ENCODE measurements at regions of chr1 and their contacts with region 1.

Region 1: DNA sequence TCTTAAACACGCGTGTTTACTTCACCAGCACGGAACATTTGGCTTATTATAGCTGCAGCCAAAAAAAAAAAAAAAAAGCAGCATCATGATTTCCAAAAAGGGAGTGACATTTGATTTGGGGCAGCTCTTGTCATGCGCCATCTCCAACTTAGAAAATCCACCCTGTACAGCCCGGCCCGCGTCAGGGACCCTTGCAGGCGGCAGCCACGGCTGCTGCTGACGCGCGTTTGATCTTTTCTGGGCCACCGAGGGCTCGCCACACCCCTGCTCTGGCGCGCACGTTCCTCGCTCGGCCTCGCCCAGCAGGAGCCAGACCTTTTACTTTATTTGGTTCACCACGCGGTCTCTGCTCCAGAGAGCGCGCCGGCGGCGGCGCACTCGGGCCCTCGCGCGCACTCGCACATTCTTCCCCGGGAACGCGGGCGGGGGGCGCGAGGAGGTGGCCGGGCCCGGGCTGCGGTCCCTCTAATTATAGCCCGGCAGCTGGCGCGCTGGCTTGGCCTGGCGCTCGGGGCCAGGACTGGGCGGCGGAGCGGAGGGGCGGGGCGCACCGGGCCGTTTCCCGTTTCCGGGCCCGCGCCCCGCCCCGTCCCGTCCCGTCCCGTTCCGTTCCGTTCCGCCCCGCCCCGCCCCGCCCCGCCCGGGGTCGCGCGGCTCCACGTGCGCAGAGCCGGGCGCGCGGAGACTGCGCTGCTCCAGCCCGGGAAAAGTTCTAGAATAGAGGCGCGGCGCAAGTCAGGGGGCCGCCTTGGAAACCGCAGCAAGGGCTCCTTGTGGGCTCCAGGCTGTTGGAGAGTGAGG is 10.2 kb downstream of the IRF2BP2 start:
- DNase-seq: peak; percentile 28 to 94 (median 66)
- ATAC-seq: peak; percentile 62
- H3K4me3 ChIP-seq: peak overlapping the region; percentile 65
- H3K4me3 Mint-ChIP-seq: peak overlapping the region; percentile 90
- H3K27ac ChIP-seq: peak overlapping the region; percentile 81 to 95
- H3K27ac Mint-ChIP-seq: peak overlapping the region; percentile 98
- H3K4me1 ChIP-seq: peaks cover 45% of the 10 kb centered on the region
- H3K4me1 Mint-ChIP-seq: peaks cover 61% of the 10 kb centered on the region
- H3K27me3 ChIP-seq: no peaks in the 10 kb centered on the region
- H3K27me3 Mint-ChIP-seq: no peaks in the 10 kb centered on the region
- CTCF ChIP-seq: no peak

Region 2: DNA sequence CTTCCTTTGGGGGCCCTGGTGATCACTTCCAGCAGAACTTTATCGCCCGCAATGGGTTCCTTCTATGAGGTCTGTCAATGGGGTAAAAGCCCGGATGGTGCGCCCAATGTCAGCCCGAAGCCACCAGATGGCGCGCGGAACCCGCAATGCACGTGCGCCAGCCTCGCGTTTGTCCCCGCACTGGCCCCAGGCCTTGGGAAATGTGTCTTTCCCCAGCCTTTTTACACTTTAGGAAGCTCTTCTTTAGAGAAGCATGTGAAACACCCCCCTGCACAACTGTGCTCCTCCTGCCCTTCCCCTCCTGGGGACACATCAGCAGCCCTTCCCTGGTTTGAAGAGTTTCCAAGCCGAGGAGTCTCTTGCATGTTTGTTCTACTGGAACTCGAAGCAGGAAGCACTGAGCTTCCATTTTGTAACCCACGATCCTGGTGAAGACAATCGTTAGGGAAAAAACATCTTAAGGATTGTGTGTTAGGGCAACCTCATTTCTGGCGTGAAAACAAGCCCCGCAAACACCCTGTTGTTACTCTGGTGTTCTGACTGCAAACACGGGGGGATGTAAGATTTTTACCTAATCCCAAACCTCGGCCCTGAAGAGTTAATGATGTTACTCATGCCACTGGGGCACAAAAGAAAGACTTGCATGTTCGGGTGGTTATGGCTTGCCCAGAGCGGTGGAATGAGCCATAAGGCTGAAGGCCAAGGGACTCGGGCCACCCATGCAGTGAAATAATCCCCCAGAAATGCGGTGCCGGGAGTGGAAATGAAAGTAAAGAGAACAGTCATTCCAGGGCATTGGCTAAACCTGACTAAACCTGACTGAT is 100.5 kb before region 1 on chr1:
- CTCF ChIA-PET with region 1: interaction called, 3 read pairs
- POLR2A ChIA-PET with region 1: no interaction called
- intact Hi-C with region 1: loop called (anchors 2 kb)
- DNase-seq: peak; percentile 67 to 89 (median 79)
- ATAC-seq: peak; percentile 99
- H3K4me3 ChIP-seq: no peak overlapping the region
- H3K4me3 Mint-ChIP-seq: no peak overlapping the region
- H3K27ac ChIP-seq: no peak overlapping the region
- H3K27ac Mint-ChIP-seq: no peak overlapping the region
- H3K4me1 ChIP-seq: peaks cover 10% of the 10 kb centered on the region
- H3K4me1 Mint-ChIP-seq: peaks cover 8% of the 10 kb centered on the region
- H3K27me3 ChIP-seq: no peaks in the 10 kb centered on the region
- H3K27me3 Mint-ChIP-seq: no peaks in the 10 kb centered on the region
- CTCF ChIP-seq: peak; percentile 88

Region 3: DNA sequence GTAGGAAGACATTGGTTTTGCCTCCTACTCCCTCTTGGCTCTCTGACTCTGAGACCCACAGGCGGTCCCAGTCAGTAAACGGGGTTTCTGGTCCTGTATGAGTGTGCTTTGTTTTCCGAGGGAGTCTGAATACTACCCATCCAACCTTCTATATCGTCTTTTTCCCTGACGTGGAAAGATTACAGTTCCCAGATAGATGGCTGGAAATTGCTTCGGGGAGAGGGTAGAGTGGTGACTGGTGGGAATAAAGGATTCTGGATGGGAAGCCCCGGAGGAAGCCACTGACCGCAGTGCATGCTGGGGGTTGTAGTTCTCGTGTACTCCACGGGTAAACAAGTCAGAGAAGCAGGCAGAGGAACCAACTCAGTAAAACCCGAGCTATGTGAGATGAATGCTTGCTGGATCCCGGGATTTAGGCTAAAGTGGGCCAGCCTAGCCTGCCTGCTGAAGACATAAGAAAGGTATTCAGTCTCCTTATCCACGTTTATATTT is 76.3 kb after region 1 on chr1:
- CTCF ChIA-PET with region 1: no interaction called
- POLR2A ChIA-PET with region 1: no interaction called
- intact Hi-C with region 1: no loop called
- DNase-seq: peak; percentile 17 to 73 (median 46)
- ATAC-seq: peak; percentile 79
- H3K4me3 ChIP-seq: peak overlapping the region; percentile 40
- H3K4me3 Mint-ChIP-seq: peak overlapping the region; percentile 81
- H3K27ac ChIP-seq: no peak overlapping the region
- H3K27ac Mint-ChIP-seq: peak overlapping the region; percentile 8
- H3K4me1 ChIP-seq: peaks cover 9% of the 10 kb centered on the region
- H3K4me1 Mint-ChIP-seq: peaks cover 12% of the 10 kb centered on the region
- H3K27me3 ChIP-seq: no peaks in the 10 kb centered on the region
- H3K27me3 Mint-ChIP-seq: no peaks in the 10 kb centered on the region
- CTCF ChIP-seq: no peak

Region 4: DNA sequence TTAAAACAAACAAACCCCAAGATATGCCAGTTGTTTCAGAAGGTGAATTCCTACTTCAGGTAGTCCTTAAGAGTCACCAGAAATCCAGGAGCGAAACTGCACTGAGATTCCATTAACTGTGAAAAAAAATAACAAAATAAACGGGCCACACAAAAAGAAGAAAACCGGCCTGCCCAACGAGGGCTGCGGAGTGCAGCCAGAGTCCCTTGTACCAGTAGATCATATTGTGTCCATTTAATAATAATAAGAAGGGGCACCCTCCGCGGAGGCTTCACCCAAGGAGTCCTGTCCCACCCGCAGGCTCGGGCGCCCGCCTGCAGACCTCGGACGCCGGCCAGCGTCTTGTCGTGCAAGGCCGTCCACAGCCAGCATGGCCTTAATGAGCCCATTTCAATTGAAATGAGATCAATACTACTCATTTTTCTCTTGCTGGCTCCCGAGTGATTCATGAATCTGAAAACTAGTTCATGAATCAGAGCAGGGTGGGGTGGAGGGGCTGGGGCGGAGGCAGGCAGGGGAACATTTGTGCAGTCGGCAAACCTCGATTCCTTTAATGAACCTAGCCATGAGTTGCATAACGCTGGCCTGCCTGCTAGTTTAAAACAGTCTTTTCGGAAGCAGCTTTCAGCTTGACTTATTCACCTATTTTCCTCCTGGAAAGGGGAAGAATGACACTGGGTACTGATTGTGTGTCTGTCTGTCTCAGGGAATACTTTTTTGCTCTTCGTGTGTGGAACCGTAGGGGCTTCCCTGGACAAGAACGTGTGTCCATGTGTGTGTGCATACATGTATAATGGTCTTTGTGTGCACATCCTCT is 123.3 kb after region 1 on chr1:
- CTCF ChIA-PET with region 1: interaction called, 3 read pairs
- POLR2A ChIA-PET with region 1: interaction called, 55 read pairs
- intact Hi-C with region 1: no loop called
- DNase-seq: peak in 13 of 14 experiments; percentile 23 to 81 (median 51)
- ATAC-seq: peak; percentile 9
- H3K4me3 ChIP-seq: peak overlapping the region; percentile 33
- H3K4me3 Mint-ChIP-seq: peak overlapping the region; percentile 76
- H3K27ac ChIP-seq: peak overlapping the region; percentile 94 to 98
- H3K27ac Mint-ChIP-seq: peak overlapping the region; percentile 93
- H3K4me1 ChIP-seq: peaks cover 56% of the 10 kb centered on the region
- H3K4me1 Mint-ChIP-seq: peaks cover 93% of the 10 kb centered on the region
- H3K27me3 ChIP-seq: no peaks in the 10 kb centered on the region
- H3K27me3 Mint-ChIP-seq: no peaks in the 10 kb centered on the region
- CTCF ChIP-seq: no peak

Region 5: DNA sequence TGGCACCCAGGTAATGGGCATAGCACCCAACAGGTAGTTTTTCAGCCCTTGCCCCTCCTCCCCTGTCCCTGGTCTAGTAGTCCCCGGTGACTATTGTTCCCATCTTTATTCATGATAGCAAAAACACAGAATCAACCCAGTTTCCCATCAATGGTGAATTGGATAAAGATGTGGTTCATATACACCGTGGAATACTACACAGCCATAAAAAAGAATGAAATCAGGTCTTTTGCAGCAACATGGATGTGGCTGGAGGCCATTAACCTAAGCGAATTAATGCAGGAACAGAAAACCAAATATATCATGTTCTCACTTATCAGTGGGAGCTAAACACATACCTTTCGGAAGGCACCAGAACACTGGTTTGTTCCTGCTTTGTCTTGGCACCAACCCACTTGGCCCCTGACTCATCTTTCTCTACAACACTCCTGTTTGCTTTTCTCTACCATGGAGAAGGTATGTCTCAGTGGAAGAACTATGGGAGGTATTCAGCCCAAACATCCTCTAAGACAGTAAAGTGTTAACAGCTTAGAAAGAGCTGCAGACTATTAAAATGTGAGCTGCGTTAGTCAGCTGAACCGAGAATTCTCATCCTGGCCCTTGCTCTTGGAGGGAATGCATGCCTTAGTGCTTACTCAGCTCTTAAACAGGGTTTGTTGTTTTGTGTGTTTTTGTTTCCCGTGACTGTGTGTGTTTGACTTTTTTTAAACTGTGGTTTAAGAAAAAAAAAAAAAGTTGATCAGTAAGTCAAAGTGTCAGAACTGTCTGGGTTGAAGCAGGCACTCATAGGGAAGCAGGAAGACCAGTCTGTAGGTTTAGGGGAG is 325.8 kb after region 1 on chr1:
- CTCF ChIA-PET with region 1: interaction called, 3 read pairs
- POLR2A ChIA-PET with region 1: interaction called, 13 read pairs
- intact Hi-C with region 1: no loop called
- DNase-seq: peak in 4 of 14 experiments; percentile 48 to 67 (median 62)
- ATAC-seq: peak; percentile 58
- H3K4me3 ChIP-seq: peak overlapping the region; percentile 43
- H3K4me3 Mint-ChIP-seq: peak overlapping the region; percentile 42
- H3K27ac ChIP-seq: no peak overlapping the region
- H3K27ac Mint-ChIP-seq: peak overlapping the region; percentile 76
- H3K4me1 ChIP-seq: peaks cover 60% of the 10 kb centered on the region
- H3K4me1 Mint-ChIP-seq: peaks cover 55% of the 10 kb centered on the region
- H3K27me3 ChIP-seq: no peaks in the 10 kb centered on the region
- H3K27me3 Mint-ChIP-seq: no peaks in the 10 kb centered on the region
- CTCF ChIP-seq: no peak

Region 6: DNA sequence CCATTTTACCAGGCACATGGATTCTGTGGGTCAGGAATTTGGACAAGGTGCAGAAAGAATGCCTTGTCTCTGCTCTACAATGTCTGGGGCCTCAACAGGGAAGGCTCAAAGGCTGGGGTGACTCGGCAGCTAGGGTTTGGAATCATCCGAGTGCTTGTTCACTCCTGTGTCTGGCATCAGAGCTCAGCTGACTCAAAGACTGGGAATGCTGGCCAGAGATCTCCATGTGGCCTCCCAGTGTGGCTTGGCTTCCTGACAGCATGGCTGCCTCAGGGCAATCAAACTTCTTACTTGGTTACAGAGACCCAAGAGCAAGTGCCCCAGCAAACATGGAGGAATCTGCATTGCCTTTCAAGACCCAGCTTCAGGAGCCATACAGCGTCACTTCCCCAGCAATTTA is 418.3 kb after region 1 on chr1:
- CTCF ChIA-PET with region 1: interaction called, 3 read pairs
- POLR2A ChIA-PET with region 1: no interaction called
- intact Hi-C with region 1: loop called in 1 of 2 experiments (anchors 5 kb)
- DNase-seq: no peak
- ATAC-seq: no peak
- H3K4me3 ChIP-seq: no peak overlapping the region
- H3K4me3 Mint-ChIP-seq: no peak overlapping the region
- H3K27ac ChIP-seq: no peak overlapping the region
- H3K27ac Mint-ChIP-seq: no peak overlapping the region
- H3K4me1 ChIP-seq: peaks cover 14% of the 10 kb centered on the region
- H3K4me1 Mint-ChIP-seq: peaks cover 26% of the 10 kb centered on the region
- H3K27me3 ChIP-seq: no peaks in the 10 kb centered on the region
- H3K27me3 Mint-ChIP-seq: no peaks in the 10 kb centered on the region
- CTCF ChIP-seq: no peak

Measured in CD4-positive, alpha-beta T cell (primary cell).